ENCODE measurements at regions of chr11 and their contacts with region 1.

Region 1: GRCh38 chr11:125062931-125063428 is at the start of gene SLC37A2:
- DNase-seq: peak; percentile 76 to 89
- H3K4me3 ChIP-seq: peak within 1 kb of the TSS; percentile 56
- H3K4me3 Mint-ChIP-seq: peak within 1 kb of the TSS; percentile 84
- H3K27ac Mint-ChIP-seq: peak within 1 kb of the TSS; percentile 39
- H3K4me1 ChIP-seq: peaks cover 14% of the 10 kb centered on the region
- H3K4me1 Mint-ChIP-seq: peaks cover 8% of the 10 kb centered on the region
- H3K27me3 ChIP-seq: no peaks in the 10 kb centered on the region
- H3K27me3 Mint-ChIP-seq: peaks cover 3% of the 10 kb centered on the region
- CTCF ChIP-seq: peak; percentile 44 to 56
- total RNA-seq, gene SLC37A2: 11.4 and 13.8 TPM in 2 replicates

Region 2: GRCh38 chr11:124707829-124708228 is 355.2 kb before region 1 on chr11:
- CTCF ChIA-PET with region 1: no interaction called
- POLR2A ChIA-PET with region 1: no interaction called
- intact Hi-C with region 1: no loop called
- DNase-seq: no peak
- H3K4me3 ChIP-seq: no peak overlapping the region
- H3K4me3 Mint-ChIP-seq: no peak overlapping the region
- H3K27ac Mint-ChIP-seq: no peak overlapping the region
- H3K4me1 ChIP-seq: no peaks in the 10 kb centered on the region
- H3K4me1 Mint-ChIP-seq: no peaks in the 10 kb centered on the region
- H3K27me3 ChIP-seq: no peaks in the 10 kb centered on the region; the same call in 1 of the 2 replicates
- H3K27me3 Mint-ChIP-seq: peaks cover 18% of the 10 kb centered on the region
- CTCF ChIP-seq: no peak

Region 3: DNA sequence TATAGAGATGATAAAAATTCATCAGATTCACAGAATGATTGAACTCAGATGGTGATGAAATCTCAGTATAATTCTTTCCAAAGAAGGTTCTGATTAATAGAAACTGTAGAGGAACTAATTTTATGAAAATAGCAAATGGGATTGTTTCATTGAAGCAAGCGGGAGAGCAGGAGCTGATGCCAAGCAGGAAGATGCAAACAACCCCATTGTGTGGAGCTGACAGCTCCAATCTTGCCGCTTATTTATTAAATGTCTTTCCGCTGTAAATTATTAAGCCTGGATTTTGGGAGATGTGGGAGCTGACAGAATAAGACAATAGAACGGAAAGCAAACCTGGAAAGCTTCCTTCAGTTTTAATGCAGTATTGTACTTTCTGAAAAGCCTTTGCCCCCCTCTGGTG is 54.4 kb after region 1 on chr11:
- CTCF ChIA-PET with region 1: no interaction called
- POLR2A ChIA-PET with region 1: interaction called, 3 read pairs
- intact Hi-C with region 1: loop called (anchors 1 kb)
- DNase-seq: no peak
- H3K4me3 ChIP-seq: no peak overlapping the region
- H3K4me3 Mint-ChIP-seq: no peak overlapping the region
- H3K27ac Mint-ChIP-seq: no peak overlapping the region
- H3K4me1 ChIP-seq: peaks cover 13% of the 10 kb centered on the region
- H3K4me1 Mint-ChIP-seq: peaks cover 18% of the 10 kb centered on the region
- H3K27me3 ChIP-seq: no peaks in the 10 kb centered on the region
- H3K27me3 Mint-ChIP-seq: peaks cover 4% of the 10 kb centered on the region
- CTCF ChIP-seq: no peak